ENCODE measurements at regions of chr10 and their contacts with region 1.

Region 1: DNA sequence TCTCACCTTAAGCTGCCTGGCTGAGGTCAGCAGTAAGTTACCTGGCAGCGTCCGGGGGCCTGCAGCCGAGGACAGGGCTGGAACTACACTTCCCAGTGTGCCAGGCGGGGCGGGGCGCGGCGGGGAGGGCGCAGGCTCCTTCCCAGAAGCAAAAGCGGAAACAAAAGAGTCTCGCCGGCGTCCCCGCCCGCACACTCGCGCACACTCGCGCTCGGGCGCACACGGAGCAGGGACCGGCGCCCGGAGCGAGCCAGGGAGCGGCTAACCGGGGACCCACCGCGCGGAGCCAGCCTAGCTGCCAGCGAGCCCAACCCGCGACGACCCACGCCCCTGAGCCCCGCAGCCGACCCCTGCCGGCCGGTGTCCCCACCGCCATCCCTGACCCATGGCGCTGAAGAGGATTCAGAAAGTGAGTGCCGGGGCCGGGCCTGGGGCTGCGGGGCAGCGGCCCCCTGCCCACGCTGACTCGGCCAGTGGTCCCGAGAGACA is at the start of gene UBE2D1:
- DNase-seq: peak; percentile 15
- ATAC-seq: peak; percentile 98
- H3K4me3 ChIP-seq: peak within 1 kb of the TSS; percentile 95
- H3K27ac ChIP-seq: peak within 1 kb of the TSS; percentile 58
- H3K4me1 ChIP-seq: no peaks in the 10 kb centered on the region
- H3K27me3 ChIP-seq: peaks cover 0 to 3% of the 10 kb centered on the region in 2 experiments; a peak in 1 of 4 replicates
- CTCF ChIP-seq: no peak
- EP300 ChIP-seq: no peak
- POLR2A ChIP-seq: peak; percentile 99
- RAD21 ChIP-seq: no peak
- polyA plus RNA-seq, gene UBE2D1: 6.1 to 17.8 TPM

Region 2: DNA sequence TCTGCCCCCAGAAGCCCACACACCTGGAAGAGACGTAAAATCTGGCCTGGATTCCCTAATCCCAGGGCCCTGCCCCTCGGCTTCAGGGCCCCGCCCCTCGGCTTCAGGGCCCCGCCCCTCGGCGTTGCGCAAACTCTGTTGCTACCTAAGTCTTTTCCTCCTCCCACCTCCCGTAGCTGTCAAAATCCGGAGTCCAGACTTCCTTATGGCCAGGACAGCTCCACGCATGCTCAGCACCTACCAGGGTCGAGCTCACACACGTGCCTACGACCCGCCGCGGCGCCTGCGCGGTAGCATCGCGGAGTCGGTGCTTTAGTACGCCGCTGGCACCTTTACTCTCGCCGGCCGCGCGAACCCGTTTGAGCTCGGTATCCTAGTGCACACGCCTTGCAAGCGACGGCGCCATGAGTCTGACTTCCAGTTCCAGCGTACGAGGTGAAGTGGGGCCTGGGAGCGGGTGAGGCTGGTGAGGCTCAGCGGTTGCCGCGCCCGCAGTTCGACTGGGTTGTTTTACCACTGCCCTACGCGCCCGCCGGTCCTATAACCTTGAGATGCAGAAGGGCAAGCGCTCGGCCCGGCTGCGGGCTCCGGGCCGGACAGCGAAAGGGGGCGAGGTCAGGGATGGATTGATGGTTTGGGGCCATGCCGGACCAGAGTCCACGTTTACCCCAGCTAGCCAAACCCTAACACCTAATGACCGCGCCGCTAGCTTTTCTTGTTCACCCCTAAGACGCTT is 65.8 kb before region 1 on chr10 and contains the start of gene CISD1:
- CTCF ChIA-PET with region 1: no interaction called
- POLR2A ChIA-PET with region 1: interaction called, 7 read pairs
- RAD21 ChIA-PET with region 1: no interaction called
- SMC1A ChIA-PET with region 1: no interaction called
- in situ Hi-C with region 1: no loop called
- intact Hi-C with region 1: loop called (anchors 5 kb)
- DNase-seq: peak; percentile 96
- ATAC-seq: peak; percentile 76
- H3K4me3 ChIP-seq: peak within 1 kb of the TSS; percentile 76
- H3K27ac ChIP-seq: peak within 1 kb of the TSS; percentile 86
- H3K4me1 ChIP-seq: 0 out of 2 replicates have a peak, but pooled peaks cover 5% of the 10 kb centered on the region
- H3K27me3 ChIP-seq: no peaks in the 10 kb centered on the region
- CTCF ChIP-seq: no peak
- EP300 ChIP-seq: no peak
- POLR2A ChIP-seq: peak; percentile 93
- RAD21 ChIP-seq: no peak
- polyA plus RNA-seq, gene CISD1: 156 to 162 TPM

Region 3: DNA sequence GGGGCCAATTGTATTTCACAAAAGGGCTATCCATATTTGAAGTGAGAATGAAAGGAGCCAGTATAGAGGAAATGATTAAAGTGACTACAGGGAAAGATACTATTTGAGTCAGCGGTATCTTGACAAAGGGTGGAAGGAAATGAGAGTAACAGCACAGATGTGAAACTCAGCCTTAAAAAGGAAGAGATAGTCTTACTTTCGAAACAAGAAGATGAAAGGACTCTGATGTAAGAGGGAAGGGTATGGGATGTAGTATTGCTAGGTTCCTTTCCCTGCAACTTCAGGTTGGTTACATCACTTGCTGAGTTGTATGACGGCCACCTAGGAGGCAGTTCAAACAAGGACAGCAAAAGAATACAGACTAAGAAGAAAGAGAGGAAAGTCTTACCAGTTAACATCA is 52.2 kb before region 1 on chr10:
- CTCF ChIA-PET with region 1: no interaction called
- POLR2A ChIA-PET with region 1: no interaction called
- RAD21 ChIA-PET with region 1: no interaction called
- SMC1A ChIA-PET with region 1: no interaction called
- in situ Hi-C with region 1: no loop called
- intact Hi-C with region 1: no loop called
- DNase-seq: peak; percentile 70
- ATAC-seq: peak; percentile 94
- H3K4me3 ChIP-seq: no peak overlapping the region; the same call in 1 of the 2 replicates
- H3K27ac ChIP-seq: peak overlapping the region; percentile 30
- H3K4me1 ChIP-seq: peaks cover 13% of the 10 kb centered on the region
- H3K27me3 ChIP-seq: no peaks in the 10 kb centered on the region
- CTCF ChIP-seq: no peak
- EP300 ChIP-seq: peak in 1 of 2 experiments; percentile 86; a peak in 2 of 4 replicates
- POLR2A ChIP-seq: no peak
- RAD21 ChIP-seq: no peak

Region 4: GRCh38 chr10:58372607-58373441 is 38.0 kb after region 1 on chr10:
- CTCF ChIA-PET with region 1: no interaction called
- POLR2A ChIA-PET with region 1: no interaction called
- RAD21 ChIA-PET with region 1: no interaction called
- SMC1A ChIA-PET with region 1: interaction called, 3 read pairs
- in situ Hi-C with region 1: no loop called
- intact Hi-C with region 1: loop called (anchors 5 kb)
- DNase-seq: peak; percentile 20
- ATAC-seq: peak; percentile 92
- H3K4me3 ChIP-seq: no peak overlapping the region
- H3K27ac ChIP-seq: no peak overlapping the region
- H3K4me1 ChIP-seq: peaks cover 6% of the 10 kb centered on the region
- H3K27me3 ChIP-seq: no peaks in the 10 kb centered on the region
- CTCF ChIP-seq: no peak
- EP300 ChIP-seq: 0 out of 4 replicates have a peak, but pooled peaks of 1 of the 2 experiments have one; percentile 8
- POLR2A ChIP-seq: no peak
- RAD21 ChIP-seq: no peak

Region 5: GRCh38 chr10:58384999-58385783 is 50.3 kb after region 1 on chr10 and contains the start of gene TFAM:
- CTCF ChIA-PET with region 1: interaction called, 6 read pairs
- POLR2A ChIA-PET with region 1: interaction called, 10 read pairs
- RAD21 ChIA-PET with region 1: interaction called, 11 read pairs
- SMC1A ChIA-PET with region 1: interaction called, 11 read pairs
- in situ Hi-C with region 1: no loop called
- intact Hi-C with region 1: loop called (anchors 1 kb)
- DNase-seq: peak; percentile 66
- ATAC-seq: peak; percentile 90
- H3K4me3 ChIP-seq: peak within 1 kb of the TSS; percentile 85
- H3K27ac ChIP-seq: peak within 1 kb of the TSS; percentile 88
- H3K4me1 ChIP-seq: peaks cover 5% of the 10 kb centered on the region
- H3K27me3 ChIP-seq: no peaks in the 10 kb centered on the region
- CTCF ChIP-seq: peak; percentile 49 to 67 (median 61)
- EP300 ChIP-seq: peak in 1 of 2 experiments; percentile 30; a peak in 1 of 4 replicates
- POLR2A ChIP-seq: peak; percentile 99
- RAD21 ChIP-seq: peak; percentile 70
- polyA plus RNA-seq, gene TFAM: 96.1 to 114 TPM

Region 6: GRCh38 chr10:58404001-58404400 is 69.1 kb after region 1 on chr10:
- CTCF ChIA-PET with region 1: no interaction called
- POLR2A ChIA-PET with region 1: no interaction called
- RAD21 ChIA-PET with region 1: no interaction called
- SMC1A ChIA-PET with region 1: no interaction called
- in situ Hi-C with region 1: no loop called
- intact Hi-C with region 1: no loop called
- DNase-seq: no peak
- ATAC-seq: no peak
- H3K4me3 ChIP-seq: no peak overlapping the region
- H3K27ac ChIP-seq: no peak overlapping the region
- H3K4me1 ChIP-seq: no peaks in the 10 kb centered on the region
- H3K27me3 ChIP-seq: no peaks in the 10 kb centered on the region; a peak in 1 of 4 replicates
- CTCF ChIP-seq: no peak
- EP300 ChIP-seq: no peak
- POLR2A ChIP-seq: no peak
- RAD21 ChIP-seq: no peak